ENCODE measurements at regions of chr11 and their contacts with region 1.

Region 1: DNA sequence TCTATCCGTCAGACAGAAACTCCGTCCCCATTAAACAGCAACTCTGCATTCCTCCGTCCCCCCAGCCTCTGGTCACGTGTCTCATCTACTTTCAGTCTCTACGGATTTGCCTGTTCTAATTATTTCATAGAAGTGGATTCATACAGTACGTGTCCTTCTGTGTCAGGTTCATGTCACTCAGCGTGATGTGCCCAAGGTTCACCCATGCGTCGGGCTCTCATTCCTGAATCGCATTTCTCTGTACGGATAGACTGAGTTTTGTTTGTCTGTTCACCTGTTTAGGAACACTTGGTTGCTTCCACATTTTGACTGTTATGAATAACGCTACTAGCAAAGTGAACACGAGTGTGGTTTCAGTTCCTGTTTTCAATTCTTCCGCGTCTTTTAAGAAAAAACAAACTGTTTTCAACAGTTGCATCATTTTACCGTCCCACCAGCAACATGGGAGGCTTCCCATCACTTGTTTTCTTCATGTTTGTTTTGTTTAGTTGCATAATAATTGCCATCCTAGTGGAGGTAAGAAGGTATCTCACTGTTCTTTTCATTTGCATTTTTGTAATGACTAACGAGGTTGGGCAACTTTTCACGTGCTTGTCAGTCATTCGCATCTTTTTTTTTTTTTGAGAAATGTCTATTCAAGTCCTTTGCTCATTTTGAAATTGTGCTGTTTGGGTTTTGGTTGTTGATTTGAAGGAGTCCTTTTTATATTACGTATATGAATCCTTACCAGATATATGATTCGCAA is 8.9 kb upstream of the NLRP6 start:
- DNase-seq: peak in 2 of 4 experiments; percentile 38 to 67
- ATAC-seq: peak; percentile 52
- H3K4me3 ChIP-seq: peak overlapping the region; percentile 43
- H3K27ac ChIP-seq: peak overlapping the region; percentile 93
- H3K4me1 ChIP-seq: peaks cover 19 to 34% of the 10 kb centered on the region in 2 experiments; a peak in 4 of 5 replicates
- H3K27me3 ChIP-seq: no peaks in the 10 kb centered on the region
- CTCF ChIP-seq: 0 out of 6 replicates have a peak, but pooled peaks of 1 of the 3 experiments have one; percentile 4
- EP300 ChIP-seq: peak; percentile 82; the same call in 1 of the 2 replicates
- POLR2A ChIP-seq: peak; percentile 43; the same call in 1 of the 2 replicates
- RAD21 ChIP-seq: no peak

Region 2: DNA sequence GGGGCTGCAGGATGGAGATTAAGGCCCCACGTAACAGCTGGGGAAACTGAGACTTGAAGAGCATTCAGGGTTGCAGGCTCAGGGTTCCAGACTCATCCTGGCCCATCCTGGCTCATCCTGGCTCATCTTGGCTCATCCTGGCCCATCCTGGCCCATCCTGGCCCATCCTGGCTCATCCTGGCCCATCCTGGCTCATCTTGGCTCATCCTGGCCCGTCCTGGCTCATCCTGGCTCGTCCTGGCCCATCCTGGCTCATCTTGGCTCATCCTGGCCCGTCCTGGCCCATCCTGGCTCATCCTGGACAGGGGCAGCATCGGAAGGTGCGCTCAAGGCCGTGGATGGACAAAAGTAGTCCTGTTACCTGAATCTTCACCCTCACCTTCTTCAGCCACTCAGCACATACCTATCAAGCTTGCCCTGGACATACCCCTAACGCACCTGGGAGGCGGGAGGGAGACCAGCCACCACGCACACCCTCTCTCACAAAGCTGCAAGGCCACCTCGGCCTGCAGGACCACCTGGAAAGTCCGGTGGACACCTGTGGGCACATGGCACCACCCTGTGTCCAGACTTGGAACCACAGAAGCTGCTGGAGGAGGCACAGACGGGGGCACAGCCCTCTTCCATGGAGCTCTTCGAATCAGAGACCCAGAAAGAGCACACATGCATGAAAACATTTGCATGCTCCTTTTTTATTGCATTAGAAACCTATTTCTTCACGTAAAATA is 11.4 kb before region 1 on chr11:
- CTCF ChIA-PET with region 1: no interaction called
- POLR2A ChIA-PET with region 1: interaction called, 10 read pairs
- in situ Hi-C with region 1: no loop called
- intact Hi-C with region 1: no loop called
- DNase-seq: no peak
- ATAC-seq: peak; percentile 61
- H3K4me3 ChIP-seq: no peak overlapping the region
- H3K27ac ChIP-seq: no peak overlapping the region
- H3K4me1 ChIP-seq: peaks cover 13 to 19% of the 10 kb centered on the region in 2 experiments
- H3K27me3 ChIP-seq: no peaks in the 10 kb centered on the region
- CTCF ChIP-seq: peak; percentile 34 to 56 (median 40); a peak in 5 of 6 replicates
- EP300 ChIP-seq: no peak
- POLR2A ChIP-seq: no peak
- RAD21 ChIP-seq: peak in 1 of 2 experiments; percentile 40; a peak in 2 of 4 replicates

Region 3: GRCh38 chr11:313787-314547 is 44.6 kb after region 1 on chr11 and contains the start of gene IFITM1:
- CTCF ChIA-PET with region 1: no interaction called
- POLR2A ChIA-PET with region 1: no interaction called
- in situ Hi-C with region 1: no loop called
- intact Hi-C with region 1: loop called (anchors 5 kb)
- DNase-seq: peak in 2 of 4 experiments; percentile 84 to 89
- ATAC-seq: peak; percentile 56
- H3K4me3 ChIP-seq: peak within 1 kb of the TSS; percentile 69
- H3K27ac ChIP-seq: peak within 1 kb of the TSS; percentile 87
- H3K4me1 ChIP-seq: peaks cover 33 to 43% of the 10 kb centered on the region in 2 experiments
- H3K27me3 ChIP-seq: no peaks in the 10 kb centered on the region
- CTCF ChIP-seq: no peak
- EP300 ChIP-seq: no peak
- POLR2A ChIP-seq: peak; percentile 97
- RAD21 ChIP-seq: 0 out of 4 replicates have a peak, but pooled peaks of 1 of the 2 experiments have one; percentile 26
- polyA plus RNA-seq, gene IFITM1: 4,252 to 5,579 TPM

Region 4: GRCh38 chr11:363948-364761 is 94.8 kb after region 1 on chr11:
- CTCF ChIA-PET with region 1: no interaction called
- POLR2A ChIA-PET with region 1: no interaction called
- in situ Hi-C with region 1: no loop called
- intact Hi-C with region 1: no loop called
- DNase-seq: no peak
- ATAC-seq: no peak
- H3K4me3 ChIP-seq: no peak overlapping the region
- H3K27ac ChIP-seq: no peak overlapping the region
- H3K4me1 ChIP-seq: peaks cover 15 to 53% of the 10 kb centered on the region in 2 experiments
- H3K27me3 ChIP-seq: peaks cover 0 to 4% of the 10 kb centered on the region in 2 experiments; a peak in 2 of 5 replicates
- CTCF ChIP-seq: 0 out of 6 replicates have a peak, but pooled peaks of 1 of the 3 experiments have one; percentile 21
- EP300 ChIP-seq: no peak
- POLR2A ChIP-seq: no peak
- RAD21 ChIP-seq: no peak

Region 5: GRCh38 chr11:384511-384910 is 115.2 kb after region 1 on chr11:
- CTCF ChIA-PET with region 1: no interaction called
- POLR2A ChIA-PET with region 1: no interaction called
- in situ Hi-C with region 1: no loop called
- intact Hi-C with region 1: no loop called
- DNase-seq: no peak
- ATAC-seq: no peak
- H3K4me3 ChIP-seq: no peak overlapping the region
- H3K27ac ChIP-seq: no peak overlapping the region
- H3K4me1 ChIP-seq: peaks cover 4 to 26% of the 10 kb centered on the region in 2 experiments; a peak in 4 of 5 replicates
- H3K27me3 ChIP-seq: no peaks in the 10 kb centered on the region
- CTCF ChIP-seq: no peak
- EP300 ChIP-seq: no peak
- POLR2A ChIP-seq: no peak
- RAD21 ChIP-seq: no peak

Region 6: DNA sequence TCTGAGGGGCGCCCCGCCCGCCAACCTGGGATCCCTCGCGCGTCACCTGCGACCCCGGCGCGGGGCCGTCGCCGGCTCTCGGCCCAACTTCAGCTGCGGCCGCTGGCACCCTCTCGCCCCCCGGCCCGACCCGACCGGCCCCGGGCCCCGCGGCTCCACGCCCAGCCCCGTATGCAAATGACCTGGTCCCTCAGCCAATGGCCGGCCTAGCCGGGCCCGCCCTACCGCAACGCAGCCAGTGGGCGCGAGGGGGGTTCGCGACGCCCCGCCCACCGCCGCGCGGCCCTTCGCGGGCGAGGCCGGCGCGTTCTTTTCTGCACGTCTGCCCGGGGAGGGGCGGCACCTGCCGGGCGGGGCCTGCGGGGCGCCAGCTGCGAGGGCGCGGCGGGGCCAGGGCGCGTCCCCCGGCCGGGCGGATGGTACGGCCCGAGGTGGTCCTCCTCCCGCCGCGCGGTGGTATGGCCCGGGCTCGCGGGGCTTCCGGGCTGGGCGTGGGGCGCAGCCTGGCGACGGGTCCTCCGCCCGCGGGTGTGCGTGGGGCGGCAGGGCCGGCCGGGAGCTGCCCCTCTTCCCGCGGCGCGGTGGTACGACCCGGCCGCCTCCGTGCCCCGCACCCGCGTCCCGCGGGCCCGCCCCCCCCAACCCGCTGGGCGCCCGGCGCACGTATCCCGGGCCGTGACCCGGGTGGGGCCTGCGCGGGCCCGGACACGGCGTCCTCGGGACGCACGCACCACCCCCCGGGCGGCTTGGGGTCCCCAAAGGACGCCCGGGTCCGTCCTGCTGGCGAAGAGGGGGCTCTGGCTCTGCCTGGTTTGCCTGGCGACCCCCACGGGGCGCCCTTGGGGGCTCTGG is 299.2 kb after region 1 on chr11:
- CTCF ChIA-PET with region 1: no interaction called
- POLR2A ChIA-PET with region 1: no interaction called
- in situ Hi-C with region 1: no loop called
- intact Hi-C with region 1: no loop called
- DNase-seq: peak; percentile 89 to 97 (median 94)
- ATAC-seq: peak; percentile 98
- H3K4me3 ChIP-seq: peak overlapping the region; percentile 84
- H3K27ac ChIP-seq: peak overlapping the region; percentile 82
- H3K4me1 ChIP-seq: peaks cover 31 to 71% of the 10 kb centered on the region in 2 experiments
- H3K27me3 ChIP-seq: no peaks in the 10 kb centered on the region
- CTCF ChIP-seq: no peak
- EP300 ChIP-seq: no peak
- POLR2A ChIP-seq: no peak
- RAD21 ChIP-seq: no peak